ENCODE measurements at regions of chr14 and their contacts with region 1.

Region 1: GRCh38 chr14:103104654-103105452 is 10.3 kb downstream of the EXOC3L4 start:
- DNase-seq: no peak
- H3K4me3 ChIP-seq: no peak overlapping the region
- H3K27ac ChIP-seq: no peak overlapping the region
- H3K27me3 ChIP-seq: peaks cover 32% of the 10 kb centered on the region
- CTCF ChIP-seq: peak; percentile 94

Region 2: GRCh38 chr14:103094406-103095209 is 10.2 kb before region 1 on chr14 and contains the start of gene EXOC3L4:
- CTCF ChIA-PET with region 1: interaction called, 22 read pairs
- POLR2A ChIA-PET with region 1: no interaction called
- DNase-seq: no peak
- H3K4me3 ChIP-seq: no peak within 1 kb of the TSS
- H3K27ac ChIP-seq: no peak within 1 kb of the TSS
- H3K27me3 ChIP-seq: peaks cover 20% of the 10 kb centered on the region
- CTCF ChIP-seq: no peak
- polyA plus RNA-seq, gene EXOC3L4: not detected in 2 replicates

Region 3: DNA sequence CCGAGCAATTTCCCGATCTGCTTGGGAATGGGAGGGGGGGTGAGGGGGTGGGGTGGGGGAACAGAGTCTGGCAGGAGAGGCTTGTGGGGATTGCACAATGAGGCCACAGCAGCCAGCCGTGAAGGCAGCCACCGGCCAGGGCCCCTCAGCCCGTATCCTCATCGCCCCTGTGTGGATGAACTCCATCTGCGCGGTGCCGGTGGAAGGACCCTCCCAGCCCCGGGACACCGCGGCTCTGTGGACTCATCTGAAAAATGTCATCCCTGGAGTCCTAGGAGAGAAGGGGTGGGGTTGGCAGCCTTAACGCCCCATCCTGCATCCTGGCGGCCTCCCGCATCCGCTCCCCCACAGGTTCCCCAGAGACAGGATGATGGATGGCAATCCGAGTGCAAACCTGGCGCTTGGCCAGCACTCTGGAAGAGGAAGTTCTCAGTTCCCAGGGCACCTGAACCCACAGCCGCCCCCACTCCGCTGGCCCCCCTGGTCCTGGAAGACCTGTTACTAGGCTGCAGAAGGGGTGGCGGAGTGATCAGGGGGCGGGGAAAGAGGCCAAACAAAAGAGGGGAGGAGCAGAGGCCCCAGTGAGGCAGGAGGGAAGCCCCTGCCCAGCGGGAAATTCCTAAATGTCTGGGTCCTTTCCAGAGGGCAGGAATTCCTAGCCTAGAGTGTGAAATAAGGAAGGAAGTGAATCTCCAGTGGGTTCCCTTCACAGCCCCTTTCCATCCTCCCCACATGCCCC is 17.2 kb after region 1 on chr14:
- CTCF ChIA-PET with region 1: interaction called, 12 read pairs
- POLR2A ChIA-PET with region 1: no interaction called
- DNase-seq: no peak
- H3K4me3 ChIP-seq: no peak overlapping the region
- H3K27ac ChIP-seq: peak overlapping the region; percentile 11
- H3K27me3 ChIP-seq: peaks cover 14% of the 10 kb centered on the region
- CTCF ChIP-seq: no peak

Region 4: GRCh38 chr14:103185051-103185992 is 80.5 kb after region 1 on chr14:
- CTCF ChIA-PET with region 1: interaction called, 50 read pairs
- POLR2A ChIA-PET with region 1: interaction called, 3 read pairs
- DNase-seq: no peak
- H3K4me3 ChIP-seq: no peak overlapping the region
- H3K27ac ChIP-seq: no peak overlapping the region
- H3K27me3 ChIP-seq: peaks cover 52% of the 10 kb centered on the region
- CTCF ChIP-seq: peak; percentile 71

Region 5: DNA sequence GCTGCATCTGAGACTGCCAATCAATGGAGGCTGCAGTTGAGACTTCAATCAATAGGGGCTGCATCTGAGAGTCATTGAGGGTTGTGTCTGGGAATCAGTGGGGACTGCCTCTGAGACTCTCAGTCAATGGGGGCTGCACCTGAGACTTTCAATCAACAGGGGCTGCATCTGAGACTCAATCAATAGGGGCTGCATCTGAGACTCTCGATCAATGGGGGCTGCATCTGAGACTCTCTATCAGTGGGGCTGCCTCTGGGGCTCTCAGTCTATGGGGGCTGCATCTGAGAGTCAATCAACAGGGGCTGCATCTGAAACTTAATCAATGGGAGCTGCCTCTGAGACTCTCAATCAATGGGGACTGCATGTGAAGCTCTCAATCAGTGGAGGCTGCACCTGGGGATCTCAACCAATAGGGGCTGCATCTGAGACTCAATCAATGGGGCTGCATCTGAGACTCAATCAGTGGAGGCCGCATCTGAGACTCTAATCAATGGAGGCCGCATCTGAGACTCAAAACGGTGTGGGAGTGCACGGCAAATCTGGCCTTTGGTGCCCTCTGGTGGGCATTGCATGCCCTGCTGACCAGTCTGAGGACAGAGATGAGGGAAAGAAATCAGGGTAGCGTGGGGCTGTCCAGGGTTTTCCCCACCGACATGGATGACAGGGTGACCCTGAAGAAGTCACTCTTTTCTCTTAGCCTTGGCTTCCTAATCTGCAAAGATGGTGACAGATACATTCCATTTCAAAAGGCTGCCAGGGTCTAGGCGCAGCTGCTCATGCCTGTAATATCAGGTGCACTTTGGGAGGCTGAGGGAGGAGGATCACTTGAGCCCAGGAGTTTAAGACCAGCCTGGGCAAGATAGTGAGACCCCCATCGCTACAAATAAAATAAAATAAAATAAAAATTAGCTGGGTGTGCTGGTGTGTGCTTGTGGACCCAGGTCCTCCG is 187.8 kb after region 1 on chr14:
- CTCF ChIA-PET with region 1: interaction called, 68 read pairs
- POLR2A ChIA-PET with region 1: no interaction called
- DNase-seq: peak; percentile 21
- H3K4me3 ChIP-seq: no peak overlapping the region
- H3K27ac ChIP-seq: no peak overlapping the region
- H3K27me3 ChIP-seq: peaks cover 40% of the 10 kb centered on the region
- CTCF ChIP-seq: peak; percentile 97

Region 6: GRCh38 chr14:103530390-103530789 is 425.5 kb after region 1 on chr14:
- CTCF ChIA-PET with region 1: no interaction called
- POLR2A ChIA-PET with region 1: no interaction called
- DNase-seq: no peak
- H3K4me3 ChIP-seq: peak overlapping the region; percentile 95
- H3K27ac ChIP-seq: no peak overlapping the region
- H3K27me3 ChIP-seq: no peaks in the 10 kb centered on the region
- CTCF ChIP-seq: no peak